CD8-positive, alpha-beta T cell (primary cell): ENCODE measurements at regions of chr12 and their contacts with region 1.

Region 1: GRCh38 chr12:50763639-50764285 is at the start of gene ATF1:
- DNase-seq: peak; percentile 80 to 96 (median 87)
- ATAC-seq: peak; percentile 67
- H3K4me3 ChIP-seq: peak within 1 kb of the TSS; percentile 95 to 96
- H3K4me3 Mint-ChIP-seq: peak within 1 kb of the TSS; percentile 84
- H3K27ac ChIP-seq: peak within 1 kb of the TSS; percentile 93 to 95
- H3K27ac Mint-ChIP-seq: peak within 1 kb of the TSS; percentile 91
- H3K4me1 ChIP-seq: peaks cover 20% of the 10 kb centered on the region
- H3K4me1 Mint-ChIP-seq: peaks cover 30% of the 10 kb centered on the region
- H3K27me3 ChIP-seq: no peaks in the 10 kb centered on the region
- H3K27me3 Mint-ChIP-seq: no peaks in the 10 kb centered on the region
- CTCF ChIP-seq: no peak
- total RNA-seq, gene ATF1: 11.3 to 16.0 TPM

Region 2: GRCh38 chr12:50111693-50112455 is 651.9 kb before region 1 on chr12 and contains the start of gene COX14:
- CTCF ChIA-PET with region 1: no interaction called
- POLR2A ChIA-PET with region 1: interaction called, 10 read pairs
- intact Hi-C with region 1: no loop called
- DNase-seq: peak; percentile 98 to 100 (median 99)
- ATAC-seq: peak; percentile 82
- H3K4me3 ChIP-seq: peak within 1 kb of the TSS; percentile 88 to 98
- H3K4me3 Mint-ChIP-seq: peak within 1 kb of the TSS; percentile 99
- H3K27ac ChIP-seq: peak within 1 kb of the TSS; percentile 97 to 98
- H3K27ac Mint-ChIP-seq: peak within 1 kb of the TSS; percentile 95
- H3K4me1 ChIP-seq: peaks cover 36% of the 10 kb centered on the region
- H3K4me1 Mint-ChIP-seq: peaks cover 35% of the 10 kb centered on the region
- H3K27me3 ChIP-seq: no peaks in the 10 kb centered on the region
- H3K27me3 Mint-ChIP-seq: no peaks in the 10 kb centered on the region
- CTCF ChIP-seq: peak; percentile 97
- total RNA-seq, gene COX14: 42.2 to 43.3 TPM

Region 3: DNA sequence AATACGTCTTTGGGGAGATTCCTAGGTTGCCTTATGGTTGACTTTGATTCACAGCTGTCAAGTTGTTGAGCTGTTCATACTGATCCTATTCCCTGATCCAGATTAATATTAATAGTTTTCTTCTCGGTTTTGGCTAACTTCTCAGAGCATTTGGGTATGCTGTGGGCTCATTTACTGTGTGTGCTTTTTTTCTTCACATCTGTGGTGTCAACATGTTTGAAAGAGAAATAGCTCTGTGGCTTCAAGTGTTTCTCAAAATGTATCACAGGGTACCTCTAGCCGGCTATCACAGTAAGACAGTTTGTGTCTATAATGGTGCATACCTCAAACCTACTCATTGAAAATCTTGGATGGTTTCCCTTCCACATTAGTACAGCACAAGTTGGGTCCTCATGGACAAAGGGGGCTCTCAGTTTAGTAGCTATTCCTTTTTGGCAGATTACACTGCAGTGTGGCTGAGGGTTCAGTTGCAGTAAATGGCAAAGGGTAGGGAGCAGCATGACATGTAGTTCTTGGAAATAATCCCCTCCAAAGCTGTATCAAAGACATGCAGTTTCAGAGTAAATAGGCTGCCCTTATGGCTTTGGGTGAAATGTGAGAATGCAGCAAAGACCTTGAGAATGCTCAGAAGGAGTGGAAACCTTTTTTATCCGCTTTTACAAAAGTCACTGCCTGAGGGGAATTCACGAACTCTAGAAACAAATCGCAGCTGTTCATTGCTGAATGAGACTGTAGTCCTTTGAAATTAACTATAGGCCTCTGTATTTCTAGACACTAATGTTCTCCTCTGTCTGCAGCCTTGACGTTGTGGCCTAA is 102.3 kb before region 1 on chr12:
- CTCF ChIA-PET with region 1: no interaction called
- POLR2A ChIA-PET with region 1: no interaction called
- intact Hi-C with region 1: no loop called
- DNase-seq: no peak
- ATAC-seq: no peak
- H3K4me3 ChIP-seq: no peak overlapping the region
- H3K4me3 Mint-ChIP-seq: no peak overlapping the region
- H3K27ac ChIP-seq: no peak overlapping the region
- H3K27ac Mint-ChIP-seq: no peak overlapping the region
- H3K4me1 ChIP-seq: no peaks in the 10 kb centered on the region
- H3K4me1 Mint-ChIP-seq: peaks cover 4% of the 10 kb centered on the region
- H3K27me3 ChIP-seq: no peaks in the 10 kb centered on the region
- H3K27me3 Mint-ChIP-seq: no peaks in the 10 kb centered on the region
- CTCF ChIP-seq: no peak

Region 4: GRCh38 chr12:50690925-50691324 is 72.8 kb before region 1 on chr12:
- CTCF ChIA-PET with region 1: no interaction called
- POLR2A ChIA-PET with region 1: no interaction called
- intact Hi-C with region 1: no loop called
- DNase-seq: no peak
- ATAC-seq: no peak
- H3K4me3 ChIP-seq: no peak overlapping the region
- H3K4me3 Mint-ChIP-seq: no peak overlapping the region
- H3K27ac ChIP-seq: no peak overlapping the region
- H3K27ac Mint-ChIP-seq: no peak overlapping the region
- H3K4me1 ChIP-seq: no peaks in the 10 kb centered on the region
- H3K4me1 Mint-ChIP-seq: no peaks in the 10 kb centered on the region
- H3K27me3 ChIP-seq: no peaks in the 10 kb centered on the region
- H3K27me3 Mint-ChIP-seq: no peaks in the 10 kb centered on the region
- CTCF ChIP-seq: no peak

Region 5: DNA sequence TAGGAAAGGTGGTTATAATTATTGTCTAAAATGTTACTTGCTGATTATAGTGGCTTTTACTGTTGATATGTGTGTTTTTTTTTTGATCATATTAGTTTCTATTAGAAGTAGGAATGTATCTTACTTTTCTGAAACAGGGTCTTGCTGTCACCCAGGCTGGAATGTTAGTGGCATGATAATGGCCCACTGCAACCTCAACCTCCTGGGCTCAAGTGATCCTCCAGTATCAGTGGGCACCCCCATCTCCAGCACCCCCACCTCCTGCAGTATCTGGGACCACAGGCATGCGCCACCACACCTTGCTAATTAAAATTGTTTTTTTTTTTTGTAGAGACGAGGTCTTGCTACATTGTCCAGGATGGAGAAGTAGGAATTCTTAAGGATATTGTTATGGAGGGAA is 11.5 kb after region 1 on chr12:
- CTCF ChIA-PET with region 1: interaction called, 10 read pairs
- POLR2A ChIA-PET with region 1: interaction called, 10 read pairs
- intact Hi-C with region 1: no loop called
- DNase-seq: no peak
- ATAC-seq: no peak
- H3K4me3 ChIP-seq: no peak overlapping the region
- H3K4me3 Mint-ChIP-seq: no peak overlapping the region
- H3K27ac ChIP-seq: no peak overlapping the region
- H3K27ac Mint-ChIP-seq: no peak overlapping the region
- H3K4me1 ChIP-seq: no peaks in the 10 kb centered on the region
- H3K4me1 Mint-ChIP-seq: peaks cover 31% of the 10 kb centered on the region
- H3K27me3 ChIP-seq: no peaks in the 10 kb centered on the region
- H3K27me3 Mint-ChIP-seq: no peaks in the 10 kb centered on the region
- CTCF ChIP-seq: no peak

Region 6: GRCh38 chr12:50825372-50825838 is 61.6 kb after region 1 on chr12:
- CTCF ChIA-PET with region 1: interaction called, 18 read pairs
- POLR2A ChIA-PET with region 1: interaction called, 3 read pairs
- intact Hi-C with region 1: loop called (anchors 1 kb)
- DNase-seq: peak in 2 of 9 experiments; percentile 67 to 81
- ATAC-seq: peak; percentile 92
- H3K4me3 ChIP-seq: no peak overlapping the region
- H3K4me3 Mint-ChIP-seq: no peak overlapping the region
- H3K27ac ChIP-seq: peak overlapping the region; percentile 6 to 26
- H3K27ac Mint-ChIP-seq: peak overlapping the region; percentile 87
- H3K4me1 ChIP-seq: no peaks in the 10 kb centered on the region
- H3K4me1 Mint-ChIP-seq: peaks cover 7% of the 10 kb centered on the region
- H3K27me3 ChIP-seq: no peaks in the 10 kb centered on the region
- H3K27me3 Mint-ChIP-seq: no peaks in the 10 kb centered on the region
- CTCF ChIP-seq: peak; percentile 67

Region 7: GRCh38 chr12:51047655-51048540 is 284.1 kb after region 1 on chr12 and contains the start of gene LETMD1:
- CTCF ChIA-PET with region 1: no interaction called
- POLR2A ChIA-PET with region 1: interaction called, 4 read pairs
- intact Hi-C with region 1: loop called (anchors 1 to 2 kb)
- DNase-seq: peak; percentile 83 to 99 (median 88)
- ATAC-seq: peak; percentile 94
- H3K4me3 ChIP-seq: peak within 1 kb of the TSS; percentile 79 to 83
- H3K4me3 Mint-ChIP-seq: peak within 1 kb of the TSS; percentile 98
- H3K27ac ChIP-seq: peak within 1 kb of the TSS; percentile 74 to 96
- H3K27ac Mint-ChIP-seq: peak within 1 kb of the TSS; percentile 97
- H3K4me1 ChIP-seq: peaks cover 23% of the 10 kb centered on the region
- H3K4me1 Mint-ChIP-seq: peaks cover 34% of the 10 kb centered on the region
- H3K27me3 ChIP-seq: no peaks in the 10 kb centered on the region
- H3K27me3 Mint-ChIP-seq: no peaks in the 10 kb centered on the region
- CTCF ChIP-seq: peak; percentile 95
- total RNA-seq, gene LETMD1: 51.3 to 55.2 TPM

Region 8: GRCh38 chr12:51217968-51218606 is 454.3 kb after region 1 on chr12 and contains the start of gene POU6F1:
- CTCF ChIA-PET with region 1: no interaction called
- POLR2A ChIA-PET with region 1: interaction called, 4 read pairs
- intact Hi-C with region 1: loop called in 1 of 2 experiments (anchors 5 kb)
- DNase-seq: peak; percentile 36 to 89 (median 66)
- ATAC-seq: peak; percentile 82
- H3K4me3 ChIP-seq: peak within 1 kb of the TSS; percentile 96
- H3K4me3 Mint-ChIP-seq: peak within 1 kb of the TSS; percentile 93
- H3K27ac ChIP-seq: peak within 1 kb of the TSS; percentile 88 to 92
- H3K27ac Mint-ChIP-seq: peak within 1 kb of the TSS; percentile 97
- H3K4me1 ChIP-seq: peaks cover 19% of the 10 kb centered on the region
- H3K4me1 Mint-ChIP-seq: peaks cover 24% of the 10 kb centered on the region
- H3K27me3 ChIP-seq: no peaks in the 10 kb centered on the region
- H3K27me3 Mint-ChIP-seq: no peaks in the 10 kb centered on the region
- CTCF ChIP-seq: peak; percentile 64
- total RNA-seq, gene POU6F1: 21.2 to 21.4 TPM